ENCODE measurements at regions of chr1 and their contacts with region 1.

Region 1: DNA sequence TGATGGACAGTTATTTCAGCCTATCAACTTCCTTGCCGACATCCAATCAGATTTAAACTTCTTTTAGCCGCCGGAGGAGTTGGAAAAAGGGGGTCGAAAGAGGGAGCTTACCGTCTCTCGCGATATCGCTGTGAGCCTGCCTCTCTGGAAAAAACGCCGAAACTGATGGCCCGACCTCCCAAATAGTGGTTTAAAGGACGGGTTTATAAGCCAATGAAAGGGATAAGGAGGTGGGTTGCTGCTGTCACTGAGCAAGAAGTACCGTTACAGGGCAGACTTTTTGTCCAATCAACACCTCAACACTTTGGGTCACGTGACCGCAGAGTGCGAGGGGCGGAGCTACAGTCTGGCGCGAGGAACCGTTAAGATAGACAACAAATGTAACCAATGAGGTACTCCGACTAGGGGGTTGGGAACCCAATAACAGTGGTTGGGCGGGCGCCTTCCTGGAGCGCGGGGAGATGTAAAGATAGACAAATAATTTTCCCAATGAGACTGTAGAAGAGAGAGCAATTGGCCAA is at the start of gene RBM15:
- DNase-seq: peak; percentile 98
- H3K4me3 Mint-ChIP-seq: no peak within 1 kb of the TSS
- H3K27ac Mint-ChIP-seq: no peak within 1 kb of the TSS
- H3K4me1 Mint-ChIP-seq: peaks cover 57% of the 10 kb centered on the region
- H3K27me3 Mint-ChIP-seq: no peaks in the 10 kb centered on the region
- total RNA-seq, gene RBM15: 59.1 to 60.2 TPM

Region 2: DNA sequence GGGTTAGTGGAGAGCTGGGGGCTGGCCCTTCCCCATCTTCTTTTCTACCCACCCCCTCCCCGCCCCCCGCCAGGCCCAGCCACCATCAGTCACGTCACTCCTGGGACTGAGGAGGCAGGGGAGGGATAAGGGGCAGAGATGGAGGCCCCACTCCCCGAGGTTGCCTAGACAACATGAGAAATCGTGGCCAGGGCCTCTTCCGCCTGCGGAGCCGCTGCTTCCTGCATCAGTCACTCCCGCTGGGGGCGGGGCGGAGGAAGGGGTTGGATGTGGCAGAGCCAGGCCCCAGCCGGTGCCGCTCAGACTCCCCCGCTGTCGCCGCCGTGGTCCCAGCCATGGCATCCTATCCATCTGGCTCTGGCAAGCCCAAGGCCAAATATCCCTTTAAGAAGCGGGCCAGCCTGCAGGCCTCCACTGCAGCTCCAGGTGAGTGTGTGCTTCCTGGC is 718.1 kb before region 1 on chr1:
- CTCF ChIA-PET with region 1: no interaction called
- POLR2A ChIA-PET with region 1: no interaction called
- intact Hi-C with region 1: loop called (anchors 2 kb)
- DNase-seq: peak; percentile 98
- H3K4me3 Mint-ChIP-seq: peak overlapping the region; percentile 98
- H3K27ac Mint-ChIP-seq: peak overlapping the region; percentile 96
- H3K4me1 Mint-ChIP-seq: peaks cover 58% of the 10 kb centered on the region
- H3K27me3 Mint-ChIP-seq: no peaks in the 10 kb centered on the region

Region 3: GRCh38 chr1:110203021-110203661 is 135.8 kb before region 1 on chr1:
- CTCF ChIA-PET with region 1: interaction called, 107 read pairs
- POLR2A ChIA-PET with region 1: interaction called, 6 read pairs
- intact Hi-C with region 1: loop called (anchors 2 kb)
- DNase-seq: peak; percentile 73
- H3K4me3 Mint-ChIP-seq: no peak overlapping the region
- H3K27ac Mint-ChIP-seq: peak overlapping the region; percentile 83
- H3K4me1 Mint-ChIP-seq: peaks cover 15% of the 10 kb centered on the region
- H3K27me3 Mint-ChIP-seq: no peaks in the 10 kb centered on the region

Region 4: DNA sequence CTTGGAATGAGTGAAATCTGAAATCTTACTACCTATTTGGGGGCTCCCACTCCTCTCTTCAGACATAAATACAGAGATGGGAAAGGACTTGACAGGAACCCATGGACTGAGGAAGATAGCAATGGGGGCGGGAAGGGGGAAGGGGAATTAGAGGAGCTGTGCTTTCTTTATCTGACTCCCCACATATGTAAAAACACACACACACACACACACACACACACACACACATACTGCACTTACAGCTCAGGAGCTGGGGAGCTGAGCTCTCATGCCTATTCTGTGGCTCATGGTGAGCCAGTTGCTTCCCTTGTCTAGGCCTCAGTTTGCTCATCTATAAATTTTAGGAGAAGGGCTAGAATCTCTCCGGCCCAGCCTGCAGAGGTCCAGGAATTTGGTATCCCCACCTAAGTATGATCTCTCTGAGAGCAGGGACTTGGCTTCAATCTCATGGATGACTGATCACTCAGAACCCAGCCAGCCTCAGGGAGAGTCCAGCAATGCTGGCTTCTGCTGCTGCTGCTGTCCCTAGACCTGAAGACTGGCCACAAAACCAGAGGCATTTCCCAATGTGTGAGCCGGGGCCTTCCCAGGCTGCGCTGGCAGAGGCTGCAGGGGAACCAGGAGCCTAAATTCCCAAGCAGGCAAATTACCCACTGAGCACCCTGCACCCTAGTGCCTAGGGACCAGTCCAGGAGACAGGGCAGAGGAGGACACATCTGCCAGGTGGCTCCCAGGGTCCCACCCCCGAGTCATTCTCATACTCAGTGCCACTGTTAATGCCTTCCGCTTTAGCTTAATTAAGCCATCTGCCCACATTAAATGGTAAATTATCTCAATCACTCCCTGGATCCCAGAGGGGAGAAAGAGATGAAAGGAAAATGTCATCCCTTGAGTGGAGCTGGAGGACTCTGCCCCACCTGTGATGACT is 57.3 kb before region 1 on chr1:
- CTCF ChIA-PET with region 1: no interaction called
- POLR2A ChIA-PET with region 1: no interaction called
- intact Hi-C with region 1: no loop called
- DNase-seq: no peak
- H3K4me3 Mint-ChIP-seq: no peak overlapping the region
- H3K27ac Mint-ChIP-seq: no peak overlapping the region
- H3K4me1 Mint-ChIP-seq: peaks cover 3% of the 10 kb centered on the region
- H3K27me3 Mint-ChIP-seq: peaks cover 2% of the 10 kb centered on the region

Region 5: GRCh38 chr1:110312188-110313121 is 26.5 kb before region 1 on chr1:
- CTCF ChIA-PET with region 1: interaction called, 38 read pairs
- POLR2A ChIA-PET with region 1: no interaction called
- intact Hi-C with region 1: no loop called
- DNase-seq: peak; percentile 81
- H3K4me3 Mint-ChIP-seq: no peak overlapping the region
- H3K27ac Mint-ChIP-seq: no peak overlapping the region
- H3K4me1 Mint-ChIP-seq: no peaks in the 10 kb centered on the region
- H3K27me3 Mint-ChIP-seq: no peaks in the 10 kb centered on the region

Region 6: DNA sequence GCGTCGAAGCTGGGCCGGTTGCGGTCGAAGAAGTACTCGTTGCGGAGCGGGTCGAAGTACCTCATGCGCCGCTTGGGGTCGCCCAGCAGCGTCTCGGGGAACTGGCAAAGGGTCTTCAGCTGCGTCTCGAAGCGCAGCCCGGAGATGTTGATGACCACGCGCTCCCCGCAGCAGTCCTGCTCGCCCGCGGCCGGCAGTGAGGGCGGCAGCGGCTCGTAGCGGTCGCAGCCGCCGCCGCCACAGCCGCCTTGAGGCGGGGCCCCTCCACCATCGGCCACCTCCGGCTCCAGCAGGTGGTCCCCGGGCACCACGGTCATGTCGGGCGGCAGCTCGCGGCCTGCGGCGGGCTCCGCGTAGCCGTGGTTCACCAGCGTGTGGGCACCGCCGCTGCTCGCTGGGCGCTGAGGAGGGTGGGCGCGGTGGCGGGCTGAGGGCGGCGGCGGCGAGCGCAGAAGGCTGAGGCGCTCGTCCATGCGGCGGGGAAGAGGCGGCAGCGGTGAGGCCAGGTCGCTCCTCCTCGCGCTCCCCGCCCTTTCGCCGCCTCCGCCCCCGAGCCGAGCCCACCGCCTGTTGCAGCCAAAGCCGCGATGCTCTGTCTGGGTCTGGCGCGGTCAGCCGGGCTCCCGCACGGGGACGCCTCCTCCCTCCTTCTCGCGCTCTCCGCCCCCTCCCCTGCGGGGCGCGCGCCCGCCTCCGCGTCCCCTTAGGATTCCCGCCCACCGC is 335.6 kb after region 1 on chr1 and contains the start of gene KCNA3:
- CTCF ChIA-PET with region 1: no interaction called
- POLR2A ChIA-PET with region 1: interaction called, 6 read pairs
- intact Hi-C with region 1: loop called (anchors 5 kb)
- DNase-seq: peak; percentile 72
- H3K4me3 Mint-ChIP-seq: peak within 1 kb of the TSS; percentile 95
- H3K27ac Mint-ChIP-seq: peak within 1 kb of the TSS; percentile 97
- H3K4me1 Mint-ChIP-seq: peaks cover 29% of the 10 kb centered on the region
- H3K27me3 Mint-ChIP-seq: no peaks in the 10 kb centered on the region
- total RNA-seq, gene KCNA3: 25.2 to 25.6 TPM

Region 7: GRCh38 chr1:111222308-111223125 is 883.6 kb after region 1 on chr1:
- CTCF ChIA-PET with region 1: no interaction called
- POLR2A ChIA-PET with region 1: no interaction called
- intact Hi-C with region 1: loop called (anchors 10 kb)
- DNase-seq: peak; percentile 89
- H3K4me3 Mint-ChIP-seq: peak overlapping the region; percentile 61
- H3K27ac Mint-ChIP-seq: peak overlapping the region; percentile 95
- H3K4me1 Mint-ChIP-seq: peaks cover 91% of the 10 kb centered on the region
- H3K27me3 Mint-ChIP-seq: no peaks in the 10 kb centered on the region

Measured in activated CD4-positive, alpha-beta memory T cell treated with anti-CD3 and anti-CD28 coated beads for 36 hours (primary cell).